H1 (cell line): ENCODE measurements at regions of chr17 and their contacts with region 1.

Region 1: GRCh38 chr17:73192894-73193701 is at the start of gene COG1:
- DNase-seq: peak in 1 of 2 experiments; percentile 80
- H3K4me3 ChIP-seq: peak within 1 kb of the TSS; percentile 87 to 95 (median 95)
- H3K27ac ChIP-seq: peak within 1 kb of the TSS; percentile 86
- H3K4me1 ChIP-seq: peaks cover 0 to 8% (median 2%) of the 10 kb centered on the region in 4 experiments; a peak in 2 of 7 replicates
- H3K27me3 ChIP-seq: no peaks in the 10 kb centered on the region
- CTCF ChIP-seq: no peak; a peak in 1 of 4 replicates
- EP300 ChIP-seq: no peak
- POLR2A ChIP-seq: peak in 1 of 2 experiments; percentile 41; a peak in 1 of 3 replicates
- RAD21 ChIP-seq: no peak
- total RNA-seq, gene COG1: 18.7 and 19.5 TPM in 2 replicates

Region 2: DNA sequence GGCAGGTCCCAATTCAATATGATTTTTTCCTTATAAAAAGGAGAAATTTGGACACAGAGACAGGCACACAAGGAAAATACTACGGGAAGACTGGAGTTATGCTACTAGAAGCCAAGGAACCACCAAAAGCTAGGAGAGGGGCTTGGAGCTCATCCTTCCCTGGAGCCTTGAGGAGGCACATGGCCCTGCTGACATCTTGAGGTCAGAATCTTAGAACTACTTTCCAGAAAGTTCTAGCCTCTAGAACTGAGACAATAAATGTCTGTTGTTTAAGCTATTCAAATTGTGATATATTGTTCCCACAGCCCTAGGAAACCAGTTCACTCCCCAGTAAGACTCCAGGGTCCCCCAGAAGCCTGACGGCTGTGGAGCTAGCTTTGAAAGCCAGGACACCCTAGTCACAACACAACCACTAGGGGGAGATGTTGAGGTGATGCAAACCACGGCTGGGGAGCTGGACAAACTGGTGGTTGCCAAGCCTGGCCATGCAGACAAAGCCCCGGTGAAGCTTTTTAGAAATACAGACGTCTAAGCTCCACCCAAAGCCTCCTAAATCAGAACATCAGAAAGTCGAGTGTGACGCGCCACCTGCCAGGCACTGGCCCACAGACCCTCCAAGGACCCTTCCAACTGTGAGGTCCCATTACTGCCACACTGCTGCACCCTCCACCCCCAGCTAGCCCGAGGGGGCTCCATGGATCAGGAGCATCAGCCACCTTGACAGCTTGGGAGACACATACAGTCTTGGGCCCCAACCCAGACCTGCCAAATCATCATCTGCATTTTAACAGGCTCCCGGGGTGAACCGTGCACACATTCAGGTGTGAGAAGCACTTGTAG is 207.0 kb before region 1 on chr17:
- CTCF ChIA-PET with region 1: interaction called, 58 read pairs
- POLR2A ChIA-PET with region 1: no interaction called
- DNase-seq: peak; percentile 39 to 84
- H3K4me3 ChIP-seq: no peak overlapping the region
- H3K27ac ChIP-seq: no peak overlapping the region
- H3K4me1 ChIP-seq: peaks cover 0 to 2% (median 0%) of the 10 kb centered on the region in 4 experiments; a peak in 2 of 7 replicates
- H3K27me3 ChIP-seq: no peaks in the 10 kb centered on the region
- CTCF ChIP-seq: peak; percentile 89 to 93 (median 92)
- EP300 ChIP-seq: no peak
- POLR2A ChIP-seq: no peak
- RAD21 ChIP-seq: peak; percentile 84 to 91

Region 3: GRCh38 chr17:73058022-73058421 is 135.1 kb before region 1 on chr17:
- CTCF ChIA-PET with region 1: no interaction called
- POLR2A ChIA-PET with region 1: no interaction called
- DNase-seq: no peak
- H3K4me3 ChIP-seq: no peak overlapping the region
- H3K27ac ChIP-seq: no peak overlapping the region
- H3K4me1 ChIP-seq: no peaks in the 10 kb centered on the region
- H3K27me3 ChIP-seq: no peaks in the 10 kb centered on the region
- CTCF ChIP-seq: no peak
- EP300 ChIP-seq: no peak
- POLR2A ChIP-seq: no peak
- RAD21 ChIP-seq: no peak

Region 4: DNA sequence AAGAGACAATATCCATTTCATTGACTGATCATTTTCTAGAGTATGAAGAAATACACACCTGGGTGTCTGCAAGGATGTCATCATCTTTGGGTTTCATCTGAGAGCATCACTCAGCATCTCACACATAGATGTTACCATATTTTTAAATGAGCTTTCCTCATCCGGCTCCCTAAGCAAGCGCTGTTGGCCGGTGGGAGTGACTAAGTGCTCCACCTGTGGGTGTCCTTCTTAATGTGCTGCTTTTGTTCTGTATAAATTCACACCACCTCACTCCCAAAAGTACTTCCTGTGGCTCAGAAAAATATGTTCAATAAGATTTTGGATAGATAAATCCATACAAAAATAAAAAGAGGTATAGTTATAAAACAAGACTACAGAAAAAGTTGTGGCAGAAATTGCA is 20.8 kb before region 1 on chr17:
- CTCF ChIA-PET with region 1: interaction called, 57 read pairs
- POLR2A ChIA-PET with region 1: interaction called, 3 read pairs
- DNase-seq: no peak
- H3K4me3 ChIP-seq: no peak overlapping the region
- H3K27ac ChIP-seq: no peak overlapping the region
- H3K4me1 ChIP-seq: peaks cover 0 to 5% (median 3%) of the 10 kb centered on the region in 4 experiments; a peak in 3 of 7 replicates
- H3K27me3 ChIP-seq: peaks cover under 1 to 8% (median 5%) of the 10 kb centered on the region in 4 experiments; a peak in 6 of 7 replicates
- CTCF ChIP-seq: no peak
- EP300 ChIP-seq: no peak
- POLR2A ChIP-seq: no peak
- RAD21 ChIP-seq: peak; percentile 6 to 7; a peak in 1 of 4 replicates

Region 5: GRCh38 chr17:73208139-73208827 is 15.2 kb after region 1 on chr17:
- CTCF ChIA-PET with region 1: interaction called, 19 read pairs
- POLR2A ChIA-PET with region 1: interaction called, 8 read pairs
- DNase-seq: no peak
- H3K4me3 ChIP-seq: no peak overlapping the region
- H3K27ac ChIP-seq: no peak overlapping the region
- H3K4me1 ChIP-seq: no peaks in the 10 kb centered on the region
- H3K27me3 ChIP-seq: no peaks in the 10 kb centered on the region
- CTCF ChIP-seq: no peak
- EP300 ChIP-seq: no peak
- POLR2A ChIP-seq: no peak
- RAD21 ChIP-seq: no peak

Region 6: DNA sequence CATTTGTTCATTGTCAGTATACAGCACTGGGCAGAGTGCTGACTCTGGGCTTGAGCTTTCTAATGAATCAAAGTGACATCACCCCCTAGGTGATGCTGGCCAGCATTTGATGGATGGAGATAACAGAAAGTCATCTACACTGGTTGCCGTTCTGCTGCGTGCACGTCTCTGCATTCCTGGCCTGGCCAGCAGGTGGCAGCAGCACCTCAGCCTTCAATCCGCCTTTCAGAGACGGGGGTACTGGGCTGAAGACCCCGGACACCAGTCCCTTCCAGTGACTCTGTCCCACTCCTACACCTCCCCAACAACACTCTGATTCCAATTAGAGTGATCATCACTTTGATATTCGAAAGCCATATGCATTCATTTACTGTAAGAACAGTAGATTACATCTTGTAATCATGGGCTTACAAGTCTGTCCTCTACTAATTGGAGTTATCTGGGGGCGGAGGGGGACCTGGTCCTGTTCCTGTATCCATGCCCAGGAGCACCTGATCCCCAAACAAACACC is 62.6 kb after region 1 on chr17:
- CTCF ChIA-PET with region 1: interaction called, 20 read pairs
- POLR2A ChIA-PET with region 1: no interaction called
- DNase-seq: peak; percentile 46 to 93
- H3K4me3 ChIP-seq: no peak overlapping the region
- H3K27ac ChIP-seq: no peak overlapping the region
- H3K4me1 ChIP-seq: peaks cover 0 to 8% (median 4%) of the 10 kb centered on the region in 4 experiments; a peak in 3 of 7 replicates
- H3K27me3 ChIP-seq: peaks cover 0 to under 1% (median 0%) of the 10 kb centered on the region in 4 experiments; a peak in 1 of 7 replicates
- CTCF ChIP-seq: peak; percentile 94 to 99 (median 98)
- EP300 ChIP-seq: no peak; a peak in 1 of 3 replicates
- POLR2A ChIP-seq: no peak
- RAD21 ChIP-seq: peak; percentile 99 to 100